Activated CD4-positive, alpha-beta memory T cell treated with anti-CD3 and anti-CD28 coated beads, Interleukin-2, amount 10 ng/mL, durations not matched to agents 7 days and 5 days (primary cell): ENCODE measurements at regions of chr2 and their contacts with region 1.

Region 1: DNA sequence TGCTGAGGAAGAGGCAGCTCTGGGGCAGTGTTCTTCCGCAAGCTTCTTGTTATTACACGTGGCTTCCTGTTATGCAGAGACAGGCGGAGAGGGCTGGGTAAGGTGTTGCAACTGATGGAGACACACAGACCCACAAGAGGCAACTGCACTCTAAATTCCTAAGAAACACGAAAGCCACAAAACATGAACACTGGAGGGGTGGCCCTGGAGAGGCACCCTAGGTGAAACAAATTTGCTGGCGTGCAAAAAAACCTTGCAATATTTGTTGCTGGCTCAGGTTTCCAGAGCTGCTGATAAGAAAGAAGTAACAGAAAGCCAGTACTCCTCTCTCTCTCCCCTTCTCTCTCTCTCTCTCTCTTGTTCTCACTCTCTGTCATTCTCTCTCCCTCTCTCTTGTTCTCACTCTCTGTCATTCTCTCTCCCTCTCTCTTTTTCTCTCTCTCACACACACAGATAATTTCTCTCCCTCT is 31.8 kb downstream of the ARHGAP25 start:
- DNase-seq: peak; percentile 84
- H3K4me3 Mint-ChIP-seq: peak overlapping the region; percentile 70
- H3K27ac Mint-ChIP-seq: peak overlapping the region; percentile 97
- H3K4me1 Mint-ChIP-seq: peaks cover 97% of the 10 kb centered on the region
- H3K27me3 Mint-ChIP-seq: no peaks in the 10 kb centered on the region

Region 2: DNA sequence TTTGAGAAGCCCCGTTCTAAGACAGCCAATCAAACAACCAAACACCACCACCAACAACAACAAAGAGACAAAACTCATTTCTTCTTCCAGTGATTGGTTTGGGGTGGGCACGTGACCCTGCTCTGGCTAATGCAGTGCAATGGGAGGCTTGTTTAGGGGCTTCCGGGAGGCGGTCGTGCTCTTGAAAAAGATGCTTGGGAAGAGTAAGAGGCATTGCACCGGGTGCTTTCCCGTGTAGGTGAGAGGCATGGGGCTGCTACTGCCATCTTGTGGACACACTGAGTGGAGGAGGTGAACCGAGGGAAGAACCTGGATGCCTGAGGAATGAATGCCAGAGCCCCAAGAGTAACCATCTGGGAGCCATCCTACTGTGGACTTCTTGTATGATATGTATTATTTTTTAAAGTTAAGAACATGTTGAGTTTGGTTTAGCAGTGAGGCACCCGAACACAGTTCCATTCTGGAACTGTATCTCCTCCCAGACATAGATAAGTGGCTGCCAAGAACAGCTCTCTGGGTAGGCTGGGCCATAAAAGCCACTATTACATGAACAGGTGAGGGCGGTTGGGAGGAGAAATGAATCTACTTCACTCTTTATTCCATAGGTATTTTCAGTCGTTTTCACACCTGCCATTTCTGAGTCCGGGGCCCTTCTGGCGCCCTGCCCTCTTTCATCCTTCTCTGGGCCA is 50.9 kb before region 1 on chr2:
- CTCF ChIA-PET with region 1: interaction called, 15 read pairs
- POLR2A ChIA-PET with region 1: interaction called, 46 read pairs
- DNase-seq: peak; percentile 58
- H3K4me3 Mint-ChIP-seq: no peak overlapping the region
- H3K27ac Mint-ChIP-seq: peak overlapping the region; percentile 89
- H3K4me1 Mint-ChIP-seq: peaks cover 85% of the 10 kb centered on the region
- H3K27me3 Mint-ChIP-seq: peaks cover 1% of the 10 kb centered on the region

Region 3: GRCh38 chr2:68726608-68727367 is 39.6 kb before region 1 on chr2:
- CTCF ChIA-PET with region 1: interaction called, 15 read pairs
- POLR2A ChIA-PET with region 1: interaction called, 46 read pairs
- DNase-seq: peak; percentile 89
- H3K4me3 Mint-ChIP-seq: peak overlapping the region; percentile 54
- H3K27ac Mint-ChIP-seq: peak overlapping the region; percentile 95
- H3K4me1 Mint-ChIP-seq: peaks cover 83% of the 10 kb centered on the region
- H3K27me3 Mint-ChIP-seq: no peaks in the 10 kb centered on the region

Region 4: DNA sequence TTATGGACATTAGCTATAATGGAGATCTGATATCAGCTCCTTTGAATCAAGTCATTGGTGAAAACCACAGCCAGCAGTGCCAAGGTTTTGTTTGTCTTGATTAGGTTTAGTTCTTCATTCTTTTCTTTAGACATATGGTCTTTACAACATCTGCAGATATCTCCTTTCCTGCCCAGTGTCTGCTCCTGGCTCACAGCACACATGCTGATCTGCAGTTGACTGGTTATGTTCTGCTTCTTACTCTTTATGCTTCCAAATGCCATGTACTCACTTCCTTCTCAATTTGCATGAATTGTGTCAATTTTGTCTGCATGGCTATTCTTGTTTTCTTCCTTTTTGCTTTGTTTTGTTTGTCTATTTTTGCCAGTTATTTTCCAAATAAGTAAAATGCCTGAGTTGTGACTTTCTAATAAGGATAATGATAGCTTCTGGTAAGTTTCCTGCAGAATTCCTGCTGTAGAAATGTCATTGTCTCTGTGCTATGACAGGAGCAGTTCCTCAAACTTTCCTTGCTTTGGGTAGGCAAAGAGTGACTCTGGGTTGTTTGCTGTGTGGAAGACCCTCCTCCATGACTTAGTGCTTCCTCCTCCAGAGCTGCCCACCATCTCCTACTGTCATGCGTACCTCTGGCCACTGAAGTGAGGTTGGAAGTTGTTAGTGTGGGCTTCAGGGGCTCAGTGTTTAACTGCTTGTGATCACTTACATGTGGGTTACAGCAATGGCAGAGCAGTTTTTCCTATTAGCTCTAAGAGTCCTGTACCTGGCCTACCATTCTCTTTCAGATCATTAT is 23.6 kb before region 1 on chr2:
- CTCF ChIA-PET with region 1: interaction called, 11 read pairs
- POLR2A ChIA-PET with region 1: interaction called, 356 read pairs
- DNase-seq: peak; percentile 18
- H3K4me3 Mint-ChIP-seq: peak overlapping the region; percentile 52
- H3K27ac Mint-ChIP-seq: peak overlapping the region; percentile 68
- H3K4me1 Mint-ChIP-seq: peaks cover 92% of the 10 kb centered on the region
- H3K27me3 Mint-ChIP-seq: no peaks in the 10 kb centered on the region

Region 5: DNA sequence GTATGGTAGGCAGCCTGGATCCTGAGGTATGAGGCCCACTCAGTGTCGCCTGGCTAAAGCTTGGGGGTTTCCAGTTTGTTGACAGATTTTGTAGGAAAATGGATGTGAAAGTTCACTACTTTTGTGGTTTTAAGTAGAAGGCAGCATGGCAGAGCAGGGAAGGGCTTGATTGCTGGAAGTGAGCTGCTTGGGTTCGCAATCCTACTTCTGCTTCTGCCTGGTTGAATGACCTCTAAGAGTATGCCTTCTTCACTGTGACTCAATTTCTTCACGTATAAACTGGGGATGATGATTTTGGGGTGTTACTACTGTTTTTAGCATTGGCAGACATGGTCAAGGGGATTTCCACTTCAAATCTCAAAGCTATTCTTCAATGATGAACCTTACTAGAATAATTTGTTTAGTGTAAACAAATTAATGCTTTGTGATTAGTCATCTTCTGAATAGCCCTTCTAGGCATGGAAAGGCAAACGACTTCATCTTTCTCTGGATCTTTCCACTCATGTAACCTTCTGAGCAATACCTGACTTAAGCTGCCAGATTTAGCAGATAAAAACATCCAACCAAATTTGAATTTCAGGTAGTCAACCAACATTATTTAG is 91.5 kb after region 1 on chr2:
- CTCF ChIA-PET with region 1: no interaction called
- POLR2A ChIA-PET with region 1: no interaction called
- DNase-seq: no peak
- H3K4me3 Mint-ChIP-seq: no peak overlapping the region
- H3K27ac Mint-ChIP-seq: no peak overlapping the region
- H3K4me1 Mint-ChIP-seq: peaks cover 11% of the 10 kb centered on the region
- H3K27me3 Mint-ChIP-seq: peaks cover 14% of the 10 kb centered on the region

Region 6: GRCh38 chr2:68909793-68910674 is 143.6 kb after region 1 on chr2:
- CTCF ChIA-PET with region 1: interaction called, 7 read pairs
- POLR2A ChIA-PET with region 1: interaction called, 16 read pairs
- DNase-seq: peak; percentile 80
- H3K4me3 Mint-ChIP-seq: no peak overlapping the region
- H3K27ac Mint-ChIP-seq: peak overlapping the region; percentile 69
- H3K4me1 Mint-ChIP-seq: peaks cover 43% of the 10 kb centered on the region
- H3K27me3 Mint-ChIP-seq: no peaks in the 10 kb centered on the region